A549 (cell line): ENCODE measurements at regions of chr20 and their contacts with region 1.

Region 1: DNA sequence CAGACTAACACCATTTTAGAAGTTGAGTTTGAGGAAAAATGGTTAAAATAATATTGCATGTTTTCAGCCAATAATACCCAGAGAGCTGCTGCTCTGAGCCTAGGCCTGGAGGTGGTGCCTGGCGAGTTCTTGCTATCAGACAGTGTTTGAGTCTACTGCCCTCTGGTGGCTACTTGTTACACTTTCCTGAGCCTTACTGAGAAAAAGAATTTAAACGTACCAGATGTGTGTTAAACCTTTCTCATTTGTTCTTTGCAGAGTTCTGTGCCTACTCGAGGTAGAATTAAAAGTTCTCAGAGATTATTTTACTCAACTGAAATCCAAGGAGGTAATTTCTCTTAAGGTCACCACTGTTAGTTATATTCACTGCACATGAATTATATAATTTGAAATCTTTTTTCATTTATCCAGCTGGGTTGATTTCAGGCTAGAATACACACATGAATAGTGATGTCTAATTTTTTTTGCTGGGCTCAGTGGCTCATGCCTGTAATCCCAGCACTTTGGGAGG is 38.2 kb downstream of the SHLD1 start:
- DNase-seq: peak; percentile 80 to 94
- ATAC-seq: peak; percentile 91 to 92
- H3K4me3 ChIP-seq: no peak overlapping the region
- H3K27ac ChIP-seq: peak overlapping the region; percentile 69 to 74
- H3K4me1 ChIP-seq: peaks cover 37% of the 10 kb centered on the region
- CTCF ChIP-seq: peak; percentile 99
- EP300 ChIP-seq: no peak
- POLR2A ChIP-seq: no peak
- RAD21 ChIP-seq: peak; percentile 100

Region 2: GRCh38 chr20:5535125-5535771 is 253.2 kb before region 1 on chr20:
- CTCF ChIA-PET with region 1: interaction called, 70 read pairs
- POLR2A ChIA-PET with region 1: no interaction called
- DNase-seq: peak in 1 of 2 experiments; percentile 60
- ATAC-seq: peak; percentile 26 to 44; a peak in 5 of 6 replicates
- H3K4me3 ChIP-seq: no peak overlapping the region
- H3K27ac ChIP-seq: peak overlapping the region; percentile 47 to 65; a peak in 5 of 6 replicates
- H3K4me1 ChIP-seq: peaks cover 22% of the 10 kb centered on the region
- CTCF ChIP-seq: no peak
- EP300 ChIP-seq: no peak
- POLR2A ChIP-seq: no peak
- RAD21 ChIP-seq: no peak

Region 3: GRCh38 chr20:5569021-5569420 is 219.4 kb before region 1 on chr20:
- CTCF ChIA-PET with region 1: interaction called, 175 read pairs
- POLR2A ChIA-PET with region 1: interaction called, 12 read pairs
- DNase-seq: peak; percentile 52 to 75
- ATAC-seq: peak; percentile 86 to 87
- H3K4me3 ChIP-seq: no peak overlapping the region
- H3K27ac ChIP-seq: peak overlapping the region; percentile 10 to 61; a peak in 3 of 6 replicates
- H3K4me1 ChIP-seq: peaks cover 12% of the 10 kb centered on the region; the same call in 2 of the 3 replicates
- CTCF ChIP-seq: peak; percentile 87
- EP300 ChIP-seq: no peak
- POLR2A ChIP-seq: no peak
- RAD21 ChIP-seq: peak; percentile 94 to 97

Region 4: GRCh38 chr20:5642155-5642981 is 146.1 kb before region 1 on chr20:
- CTCF ChIA-PET with region 1: interaction called, 13 read pairs
- POLR2A ChIA-PET with region 1: no interaction called
- DNase-seq: no peak
- ATAC-seq: no peak
- H3K4me3 ChIP-seq: no peak overlapping the region
- H3K27ac ChIP-seq: peak overlapping the region; percentile 50 to 91
- H3K4me1 ChIP-seq: peaks cover 37% of the 10 kb centered on the region
- CTCF ChIP-seq: no peak
- EP300 ChIP-seq: peak in 1 of 2 experiments; percentile 31; a peak in 1 of 5 replicates
- POLR2A ChIP-seq: no peak
- RAD21 ChIP-seq: no peak

Region 5: GRCh38 chr20:5727018-5727515 is 61.4 kb before region 1 on chr20:
- CTCF ChIA-PET with region 1: interaction called, 20 read pairs
- POLR2A ChIA-PET with region 1: no interaction called
- DNase-seq: peak in 1 of 2 experiments; percentile 23
- ATAC-seq: no peak
- H3K4me3 ChIP-seq: no peak overlapping the region
- H3K27ac ChIP-seq: peak overlapping the region; percentile 45 to 91; a peak in 5 of 6 replicates
- H3K4me1 ChIP-seq: peaks cover 46% of the 10 kb centered on the region
- CTCF ChIP-seq: no peak
- EP300 ChIP-seq: no peak
- POLR2A ChIP-seq: no peak
- RAD21 ChIP-seq: no peak

Region 6: GRCh38 chr20:5806457-5807263 is 18.2 kb after region 1 on chr20:
- CTCF ChIA-PET with region 1: interaction called, 17 read pairs
- POLR2A ChIA-PET with region 1: no interaction called
- DNase-seq: peak in 1 of 2 experiments; percentile 34
- ATAC-seq: peak in 1 of 2 experiments; percentile 64; a peak in 3 of 6 replicates
- H3K4me3 ChIP-seq: no peak overlapping the region
- H3K27ac ChIP-seq: peak overlapping the region in 1 of 2 experiments; percentile 74; a peak in 4 of 6 replicates
- H3K4me1 ChIP-seq: peaks cover 35% of the 10 kb centered on the region
- CTCF ChIP-seq: no peak
- EP300 ChIP-seq: no peak
- POLR2A ChIP-seq: no peak
- RAD21 ChIP-seq: peak; percentile 41 to 51; a peak in 4 of 5 replicates

Region 7: DNA sequence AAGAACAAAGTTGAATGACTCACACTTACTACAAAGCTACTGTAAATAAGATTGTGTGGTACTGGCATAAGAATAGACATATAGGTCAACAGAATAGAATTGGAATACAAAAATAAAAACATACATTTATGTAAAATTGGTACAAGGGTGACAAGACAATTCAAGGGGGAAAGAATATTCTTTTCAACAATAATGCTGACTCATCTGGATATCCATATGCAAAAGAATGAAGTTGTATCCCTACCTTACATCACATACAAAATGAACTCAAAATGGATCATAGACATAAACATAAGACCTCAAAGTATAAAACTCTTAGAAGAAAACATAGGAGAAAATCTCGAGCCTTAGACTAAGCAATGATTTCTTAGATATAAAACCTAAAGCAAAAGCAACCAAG is 111.0 kb after region 1 on chr20:
- CTCF ChIA-PET with region 1: no interaction called
- POLR2A ChIA-PET with region 1: no interaction called
- DNase-seq: no peak
- ATAC-seq: no peak
- H3K4me3 ChIP-seq: no peak overlapping the region
- H3K27ac ChIP-seq: no peak overlapping the region
- H3K4me1 ChIP-seq: no peaks in the 10 kb centered on the region
- CTCF ChIP-seq: no peak
- EP300 ChIP-seq: no peak
- POLR2A ChIP-seq: no peak
- RAD21 ChIP-seq: no peak

Region 8: DNA sequence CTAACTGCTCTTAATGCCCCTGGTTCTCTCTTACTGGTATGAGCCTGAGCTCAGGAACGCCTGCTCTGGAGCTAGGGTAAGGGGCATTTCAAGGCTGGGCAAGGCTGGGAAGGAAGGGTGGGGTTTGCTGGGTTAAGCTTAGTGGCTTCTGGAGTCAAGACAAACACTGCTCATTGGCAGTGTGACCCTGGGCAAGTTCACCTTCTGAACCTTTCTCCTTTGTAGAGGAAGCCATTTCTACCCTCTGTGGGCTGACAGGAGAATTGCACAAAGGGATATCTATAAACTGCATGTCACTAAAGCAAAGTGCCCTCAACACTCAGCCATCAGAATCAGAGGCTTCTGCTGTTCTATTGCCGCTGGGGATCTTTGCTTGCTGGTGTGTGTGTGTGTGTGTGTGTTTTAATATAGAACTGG is 285.7 kb after region 1 on chr20:
- CTCF ChIA-PET with region 1: interaction called, 11 read pairs
- POLR2A ChIA-PET with region 1: no interaction called
- DNase-seq: peak; percentile 52 to 57
- ATAC-seq: peak; percentile 82 to 88
- H3K4me3 ChIP-seq: no peak overlapping the region
- H3K27ac ChIP-seq: no peak overlapping the region
- H3K4me1 ChIP-seq: 0 out of 3 replicates have a peak, but pooled peaks cover 3% of the 10 kb centered on the region
- CTCF ChIP-seq: no peak
- EP300 ChIP-seq: no peak
- POLR2A ChIP-seq: no peak
- RAD21 ChIP-seq: peak; percentile 24 to 34; a peak in 3 of 5 replicates

Region 9: GRCh38 chr20:6122873-6123648 is 334.6 kb after region 1 on chr20 and contains the start of gene FERMT1:
- CTCF ChIA-PET with region 1: no interaction called
- POLR2A ChIA-PET with region 1: no interaction called
- DNase-seq: peak; percentile 85 to 89
- ATAC-seq: peak; percentile 94 to 98
- H3K4me3 ChIP-seq: peak within 1 kb of the TSS; percentile 59
- H3K27ac ChIP-seq: peak within 1 kb of the TSS; percentile 87 to 93
- H3K4me1 ChIP-seq: peaks cover 7% of the 10 kb centered on the region
- CTCF ChIP-seq: peak; percentile 25; the same call in 2 of the 3 replicates
- EP300 ChIP-seq: no peak
- POLR2A ChIP-seq: peak; percentile 93
- RAD21 ChIP-seq: 0 out of 5 replicates have a peak, but pooled peaks of 1 of the 2 experiments have one; percentile 15
- polyA plus RNA-seq, gene FERMT1: 19.1 and 22.5 TPM in 2 replicates

Region 10: GRCh38 chr20:6253396-6253795 is 465.0 kb after region 1 on chr20:
- CTCF ChIA-PET with region 1: no interaction called
- POLR2A ChIA-PET with region 1: no interaction called
- DNase-seq: no peak
- ATAC-seq: no peak
- H3K4me3 ChIP-seq: no peak overlapping the region
- H3K27ac ChIP-seq: no peak overlapping the region
- H3K4me1 ChIP-seq: no peaks in the 10 kb centered on the region
- CTCF ChIP-seq: no peak
- EP300 ChIP-seq: no peak
- POLR2A ChIP-seq: no peak
- RAD21 ChIP-seq: no peak

Region 11: GRCh38 chr20:6388671-6389197 is 600.3 kb after region 1 on chr20:
- CTCF ChIA-PET with region 1: no interaction called
- POLR2A ChIA-PET with region 1: no interaction called
- DNase-seq: no peak
- ATAC-seq: no peak
- H3K4me3 ChIP-seq: no peak overlapping the region
- H3K27ac ChIP-seq: no peak overlapping the region
- H3K4me1 ChIP-seq: no peaks in the 10 kb centered on the region
- CTCF ChIP-seq: no peak
- EP300 ChIP-seq: no peak
- POLR2A ChIP-seq: no peak
- RAD21 ChIP-seq: no peak